ENCODE measurements at regions of chr7 and their contacts with region 1.

Region 1: GRCh38 chr7:24665564-24666294 is 91.5 kb downstream of the GSDME start:
- DNase-seq: peak in 28 of 35 experiments; percentile 1 to 67 (median 21)
- ATAC-seq: peak in 3 of 4 experiments; percentile 42 to 48 (median 47)
- H3K4me3 ChIP-seq: no peak overlapping the region
- H3K4me3 Mint-ChIP-seq: no peak overlapping the region
- H3K27ac ChIP-seq: no peak overlapping the region
- H3K27ac Mint-ChIP-seq: no peak overlapping the region
- H3K4me1 ChIP-seq: no peaks in the 10 kb centered on the region
- H3K4me1 Mint-ChIP-seq: no peaks in the 10 kb centered on the region
- H3K27me3 ChIP-seq: no peaks in the 10 kb centered on the region
- H3K27me3 Mint-ChIP-seq: no peaks in the 10 kb centered on the region

Region 2: GRCh38 chr7:24609059-24609458 is 56.7 kb before region 1 on chr7:
- CTCF ChIA-PET with region 1: interaction called in 1 of 2 experiments, 12 read pairs
- POLR2A ChIA-PET with region 1: no interaction called
- DNase-seq: no peak
- ATAC-seq: no peak
- H3K4me3 ChIP-seq: no peak overlapping the region
- H3K4me3 Mint-ChIP-seq: no peak overlapping the region
- H3K27ac ChIP-seq: no peak overlapping the region
- H3K27ac Mint-ChIP-seq: no peak overlapping the region
- H3K4me1 ChIP-seq: no peaks in the 10 kb centered on the region
- H3K4me1 Mint-ChIP-seq: peaks cover 25 to 31% (median 25%) of the 10 kb centered on the region in 3 donors
- H3K27me3 ChIP-seq: no peaks in the 10 kb centered on the region
- H3K27me3 Mint-ChIP-seq: no peaks in the 10 kb centered on the region

Measured in T-cell (primary cell).